ENCODE measurements at regions of chr1 and their contacts with region 1.

Region 1: GRCh38 chr1:226827968-226828513 is 42.4 kb upstream of the PSEN2 start:
- DNase-seq: peak; percentile 91
- ATAC-seq: peak; percentile 96
- H3K4me3 ChIP-seq: peak overlapping the region in 4 of 5 experiments; percentile 21 to 53 (median 34)
- H3K4me3 Mint-ChIP-seq: peak overlapping the region; percentile 67
- H3K27ac ChIP-seq: peak overlapping the region; percentile 48 to 56
- H3K27ac Mint-ChIP-seq: peak overlapping the region; percentile 26
- H3K4me1 ChIP-seq: peaks cover 11 to 35% of the 10 kb centered on the region in 2 donors
- H3K4me1 Mint-ChIP-seq: peaks cover 36% of the 10 kb centered on the region
- H3K27me3 ChIP-seq: no peaks in the 10 kb centered on the region
- H3K27me3 Mint-ChIP-seq: no peaks in the 10 kb centered on the region
- CTCF ChIP-seq: peak; percentile 97

Region 2: DNA sequence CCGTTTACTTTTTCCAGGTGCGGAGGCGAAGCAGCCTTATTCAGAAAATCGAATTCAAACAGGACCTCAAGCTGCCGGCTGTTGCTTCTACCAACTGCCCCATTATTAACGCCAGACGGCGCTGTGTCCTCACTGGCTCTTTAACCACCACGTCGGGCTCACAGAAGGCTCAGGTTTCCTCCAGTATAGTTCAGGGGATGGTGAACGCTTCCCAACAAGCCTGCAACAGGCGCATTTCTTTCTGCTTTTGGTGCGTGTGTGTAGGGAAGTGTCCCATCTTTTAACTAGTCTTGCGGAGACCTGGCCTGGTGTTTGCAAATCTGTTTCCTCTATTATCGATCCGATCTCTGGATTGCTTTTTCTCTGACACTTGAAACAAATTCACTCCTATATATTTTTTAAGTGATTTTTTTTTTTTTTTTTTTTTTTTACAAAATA is 280.3 kb before region 1 on chr1:
- CTCF ChIA-PET with region 1: interaction called, 11 read pairs
- POLR2A ChIA-PET with region 1: no interaction called
- intact Hi-C with region 1: loop called (anchors 1 kb)
- DNase-seq: peak; percentile 83
- ATAC-seq: peak; percentile 80
- H3K4me3 ChIP-seq: peak overlapping the region in 3 of 5 experiments; percentile 34 to 51 (median 35)
- H3K4me3 Mint-ChIP-seq: peak overlapping the region; percentile 59
- H3K27ac ChIP-seq: no peak overlapping the region
- H3K27ac Mint-ChIP-seq: no peak overlapping the region
- H3K4me1 ChIP-seq: peaks cover 22 to 24% of the 10 kb centered on the region in 2 donors
- H3K4me1 Mint-ChIP-seq: peaks cover 21% of the 10 kb centered on the region
- H3K27me3 ChIP-seq: peaks cover 0 to 33% (median 4%) of the 10 kb centered on the region in 4 experiments
- H3K27me3 Mint-ChIP-seq: peaks cover 17% of the 10 kb centered on the region
- CTCF ChIP-seq: peak; percentile 88

Region 3: GRCh38 chr1:226634166-226634588 is 193.9 kb before region 1 on chr1:
- CTCF ChIA-PET with region 1: interaction called, 278 read pairs
- POLR2A ChIA-PET with region 1: no interaction called
- intact Hi-C with region 1: loop called (anchors 1 kb)
- DNase-seq: peak; percentile 88
- ATAC-seq: peak; percentile 76
- H3K4me3 ChIP-seq: no peak overlapping the region
- H3K4me3 Mint-ChIP-seq: peak overlapping the region; percentile 2
- H3K27ac ChIP-seq: peak overlapping the region; percentile 70 to 77
- H3K27ac Mint-ChIP-seq: peak overlapping the region; percentile 43
- H3K4me1 ChIP-seq: peaks cover 37 to 61% of the 10 kb centered on the region in 2 donors
- H3K4me1 Mint-ChIP-seq: peaks cover 58% of the 10 kb centered on the region
- H3K27me3 ChIP-seq: no peaks in the 10 kb centered on the region
- H3K27me3 Mint-ChIP-seq: no peaks in the 10 kb centered on the region
- CTCF ChIP-seq: peak; percentile 98

Region 4: DNA sequence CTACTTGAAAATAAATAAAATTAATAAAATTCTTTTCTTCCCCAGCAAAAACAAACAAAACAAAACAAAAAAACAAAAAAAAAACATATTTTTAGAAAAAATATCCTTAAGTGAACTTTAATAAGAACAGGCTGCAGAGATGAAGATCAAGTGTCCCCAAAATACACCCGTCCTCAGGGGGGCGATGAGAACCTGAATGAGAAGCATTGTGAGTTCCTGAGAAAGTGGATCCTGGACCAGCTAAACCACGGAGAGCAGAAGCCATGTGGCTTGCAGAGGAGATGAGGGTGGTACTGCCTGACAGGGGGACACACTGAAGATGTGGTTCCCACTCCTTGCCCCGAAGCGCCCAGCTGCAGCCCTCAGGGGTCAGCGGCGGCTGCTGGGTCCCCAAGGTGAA is 178.3 kb before region 1 on chr1:
- CTCF ChIA-PET with region 1: interaction called, 11 read pairs
- POLR2A ChIA-PET with region 1: no interaction called
- intact Hi-C with region 1: no loop called
- DNase-seq: no peak
- ATAC-seq: no peak
- H3K4me3 ChIP-seq: no peak overlapping the region
- H3K4me3 Mint-ChIP-seq: no peak overlapping the region
- H3K27ac ChIP-seq: no peak overlapping the region
- H3K27ac Mint-ChIP-seq: peak overlapping the region; percentile 46
- H3K4me1 ChIP-seq: peaks cover 15 to 21% of the 10 kb centered on the region in 2 donors
- H3K4me1 Mint-ChIP-seq: peaks cover 45% of the 10 kb centered on the region
- H3K27me3 ChIP-seq: no peaks in the 10 kb centered on the region
- H3K27me3 Mint-ChIP-seq: no peaks in the 10 kb centered on the region
- CTCF ChIP-seq: peak; percentile 35

Region 5: DNA sequence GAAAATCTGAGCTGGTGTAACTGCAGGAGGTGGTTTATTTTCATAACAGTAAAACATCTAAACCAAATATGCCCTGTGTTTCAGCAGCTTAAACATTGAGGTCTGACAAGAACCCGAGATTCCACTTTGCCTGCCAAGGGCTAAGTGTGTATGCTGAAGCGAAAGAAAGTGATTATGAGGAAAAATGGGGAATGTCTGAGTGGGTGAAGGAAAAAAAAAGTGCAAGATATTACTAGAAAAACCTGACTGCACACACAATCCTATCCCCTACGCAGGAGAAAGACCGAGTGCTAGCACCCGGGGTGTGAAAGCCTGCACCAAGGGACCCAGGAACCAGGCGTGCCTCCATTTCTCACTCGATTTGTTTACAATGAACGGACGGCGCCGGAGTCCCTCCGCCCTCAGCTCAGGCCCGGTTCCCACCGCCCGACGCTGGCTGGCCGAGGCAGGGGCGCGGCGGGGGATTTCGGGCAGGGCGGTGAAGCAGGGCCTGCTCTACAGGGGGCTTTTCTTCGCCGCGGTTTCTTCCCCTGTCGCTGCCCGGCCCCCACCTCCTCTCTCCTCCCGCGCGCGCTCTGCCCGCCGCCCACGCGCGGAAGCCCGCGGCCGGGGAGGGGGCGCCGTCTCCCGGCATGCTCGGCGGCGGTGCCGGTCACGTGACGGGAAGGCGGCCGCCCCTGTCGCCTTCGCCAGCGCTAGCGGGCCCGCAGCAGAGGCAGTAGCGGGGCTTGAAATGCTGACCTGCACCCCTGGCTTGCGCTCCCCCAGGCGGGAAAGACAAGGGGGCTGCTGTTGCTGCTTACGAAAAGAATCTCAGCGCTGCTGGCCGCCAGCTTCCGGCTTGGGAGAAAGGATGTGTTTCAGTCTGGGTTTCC is 124.8 kb before region 1 on chr1:
- CTCF ChIA-PET with region 1: interaction called, 3 read pairs
- POLR2A ChIA-PET with region 1: no interaction called
- intact Hi-C with region 1: loop called (anchors 1 kb)
- DNase-seq: peak; percentile 94
- ATAC-seq: peak; percentile 85
- H3K4me3 ChIP-seq: peak overlapping the region; percentile 63 to 80 (median 75)
- H3K4me3 Mint-ChIP-seq: peak overlapping the region; percentile 90
- H3K27ac ChIP-seq: peak overlapping the region; percentile 96 to 99
- H3K27ac Mint-ChIP-seq: peak overlapping the region; percentile 93
- H3K4me1 ChIP-seq: peaks cover 46 to 49% of the 10 kb centered on the region in 2 donors
- H3K4me1 Mint-ChIP-seq: peaks cover 55% of the 10 kb centered on the region
- H3K27me3 ChIP-seq: no peaks in the 10 kb centered on the region
- H3K27me3 Mint-ChIP-seq: no peaks in the 10 kb centered on the region
- CTCF ChIP-seq: no peak